CD8-positive, alpha-beta T cell (primary cell): ENCODE measurements at regions of chr17 and their contacts with region 1.

Region 1: GRCh38 chr17:4709794-4710692 is at the start of gene ARRB2:
- DNase-seq: peak; percentile 98 to 100 (median 99)
- ATAC-seq: peak; percentile 81
- H3K4me3 ChIP-seq: peak within 1 kb of the TSS; percentile 91 to 95
- H3K4me3 Mint-ChIP-seq: peak within 1 kb of the TSS; percentile 98
- H3K27ac ChIP-seq: peak within 1 kb of the TSS; percentile 80 to 86
- H3K27ac Mint-ChIP-seq: peak within 1 kb of the TSS; percentile 98
- H3K4me1 ChIP-seq: peaks cover 35% of the 10 kb centered on the region
- H3K4me1 Mint-ChIP-seq: peaks cover 45% of the 10 kb centered on the region
- H3K27me3 ChIP-seq: no peaks in the 10 kb centered on the region
- H3K27me3 Mint-ChIP-seq: no peaks in the 10 kb centered on the region
- CTCF ChIP-seq: peak; percentile 74
- total RNA-seq, gene ARRB2: 222 to 226 TPM

Region 2: DNA sequence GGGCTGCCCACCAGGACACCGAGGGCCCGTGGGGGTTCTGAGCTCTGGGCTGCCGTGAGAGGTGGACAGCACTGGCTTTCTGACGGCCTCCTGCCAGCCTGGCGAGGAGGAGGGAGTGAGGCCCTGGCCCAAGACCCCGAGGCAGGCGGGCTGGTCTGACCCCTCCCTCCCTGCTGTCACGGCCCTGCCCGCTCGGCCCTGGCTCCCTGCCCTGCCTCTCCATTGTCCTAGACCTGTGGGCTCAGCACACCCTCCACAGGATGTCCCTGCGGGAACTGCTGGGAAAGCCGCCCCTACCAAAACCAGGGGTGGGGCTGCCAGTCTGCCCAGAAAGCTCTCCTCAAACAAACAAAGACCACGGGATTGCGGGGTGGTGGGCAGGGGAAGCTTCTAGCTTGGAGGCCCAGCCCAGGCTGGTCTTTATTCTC is 190.7 kb before region 1 on chr17:
- CTCF ChIA-PET with region 1: no interaction called
- POLR2A ChIA-PET with region 1: no interaction called
- intact Hi-C with region 1: no loop called
- DNase-seq: no peak
- ATAC-seq: no peak
- H3K4me3 ChIP-seq: no peak overlapping the region
- H3K4me3 Mint-ChIP-seq: no peak overlapping the region
- H3K27ac ChIP-seq: no peak overlapping the region
- H3K27ac Mint-ChIP-seq: no peak overlapping the region
- H3K4me1 ChIP-seq: no peaks in the 10 kb centered on the region
- H3K4me1 Mint-ChIP-seq: no peaks in the 10 kb centered on the region
- H3K27me3 ChIP-seq: no peaks in the 10 kb centered on the region
- H3K27me3 Mint-ChIP-seq: no peaks in the 10 kb centered on the region
- CTCF ChIP-seq: no peak

Region 3: GRCh38 chr17:4739122-4740024 is 29.3 kb after region 1 on chr17 and contains the starts of genes CXCL16 and ZMYND15:
- CTCF ChIA-PET with region 1: interaction called, 5 read pairs
- POLR2A ChIA-PET with region 1: interaction called, 5 read pairs
- intact Hi-C with region 1: loop called in 1 of 2 experiments (anchors 2 kb)
- DNase-seq: peak; percentile 35 to 84 (median 70)
- ATAC-seq: peak; percentile 70
- H3K4me3 ChIP-seq: peak within 1 kb of the TSS; percentile 62 to 77
- H3K4me3 Mint-ChIP-seq: peak within 1 kb of the TSS; percentile 92
- H3K27ac ChIP-seq: peak within 1 kb of the TSS in 1 of 2 experiments; percentile 26
- H3K27ac Mint-ChIP-seq: peak within 1 kb of the TSS; percentile 92
- H3K4me1 ChIP-seq: peaks cover 10% of the 10 kb centered on the region
- H3K4me1 Mint-ChIP-seq: peaks cover 16% of the 10 kb centered on the region
- H3K27me3 ChIP-seq: peaks cover 0 to 10% of the 10 kb centered on the region in 2 experiments
- H3K27me3 Mint-ChIP-seq: peaks cover 7% of the 10 kb centered on the region
- CTCF ChIP-seq: no peak
- total RNA-seq, gene CXCL16: 41.5 to 42.3 TPM
- total RNA-seq, gene ZMYND15: 3.1 to 3.8 TPM

Region 4: GRCh38 chr17:4796553-4796921 is 86.5 kb after region 1 on chr17:
- CTCF ChIA-PET with region 1: interaction called, 4 read pairs
- POLR2A ChIA-PET with region 1: interaction called, 4 read pairs
- intact Hi-C with region 1: loop called in 1 of 2 experiments (anchors 1 kb)
- DNase-seq: peak in 2 of 9 experiments; percentile 20 to 28
- ATAC-seq: no peak
- H3K4me3 ChIP-seq: peak overlapping the region; percentile 70 to 73
- H3K4me3 Mint-ChIP-seq: peak overlapping the region; percentile 99
- H3K27ac ChIP-seq: peak overlapping the region; percentile 53 to 67
- H3K27ac Mint-ChIP-seq: peak overlapping the region; percentile 97
- H3K4me1 ChIP-seq: peaks cover 7% of the 10 kb centered on the region
- H3K4me1 Mint-ChIP-seq: peaks cover 13% of the 10 kb centered on the region
- H3K27me3 ChIP-seq: no peaks in the 10 kb centered on the region
- H3K27me3 Mint-ChIP-seq: peaks cover 2% of the 10 kb centered on the region
- CTCF ChIP-seq: no peak

Region 5: GRCh38 chr17:4881761-4882555 is 171.9 kb after region 1 on chr17:
- CTCF ChIA-PET with region 1: interaction called, 58 read pairs
- POLR2A ChIA-PET with region 1: no interaction called
- intact Hi-C with region 1: loop called (anchors 1 kb)
- DNase-seq: peak; percentile 43 to 83 (median 72)
- ATAC-seq: peak; percentile 98
- H3K4me3 ChIP-seq: no peak overlapping the region
- H3K4me3 Mint-ChIP-seq: no peak overlapping the region
- H3K27ac ChIP-seq: no peak overlapping the region
- H3K27ac Mint-ChIP-seq: no peak overlapping the region
- H3K4me1 ChIP-seq: no peaks in the 10 kb centered on the region
- H3K4me1 Mint-ChIP-seq: peaks cover 3% of the 10 kb centered on the region
- H3K27me3 ChIP-seq: no peaks in the 10 kb centered on the region
- H3K27me3 Mint-ChIP-seq: no peaks in the 10 kb centered on the region
- CTCF ChIP-seq: peak; percentile 79

Region 6: GRCh38 chr17:4920351-4921048 is 210.5 kb after region 1 on chr17:
- CTCF ChIA-PET with region 1: no interaction called
- POLR2A ChIA-PET with region 1: no interaction called
- intact Hi-C with region 1: no loop called
- DNase-seq: peak in 1 of 9 experiments; percentile 20
- ATAC-seq: no peak
- H3K4me3 ChIP-seq: no peak overlapping the region
- H3K4me3 Mint-ChIP-seq: no peak overlapping the region
- H3K27ac ChIP-seq: no peak overlapping the region
- H3K27ac Mint-ChIP-seq: no peak overlapping the region
- H3K4me1 ChIP-seq: no peaks in the 10 kb centered on the region
- H3K4me1 Mint-ChIP-seq: no peaks in the 10 kb centered on the region
- H3K27me3 ChIP-seq: no peaks in the 10 kb centered on the region
- H3K27me3 Mint-ChIP-seq: no peaks in the 10 kb centered on the region
- CTCF ChIP-seq: no peak

Region 7: GRCh38 chr17:4939796-4940624 is 230.0 kb after region 1 on chr17 and contains the starts of genes RNF167 and SLC25A11:
- CTCF ChIA-PET with region 1: interaction called, 4 read pairs
- POLR2A ChIA-PET with region 1: interaction called, 7 read pairs
- intact Hi-C with region 1: loop called (anchors 1 to 2 kb)
- DNase-seq: peak; percentile 90 to 100 (median 95)
- ATAC-seq: peak; percentile 87
- H3K4me3 ChIP-seq: peak within 1 kb of the TSS; percentile 95 to 96
- H3K4me3 Mint-ChIP-seq: peak within 1 kb of the TSS; percentile 92
- H3K27ac ChIP-seq: peak within 1 kb of the TSS; percentile 83 to 92
- H3K27ac Mint-ChIP-seq: peak within 1 kb of the TSS; percentile 95
- H3K4me1 ChIP-seq: peaks cover 54% of the 10 kb centered on the region
- H3K4me1 Mint-ChIP-seq: peaks cover 60% of the 10 kb centered on the region
- H3K27me3 ChIP-seq: no peaks in the 10 kb centered on the region
- H3K27me3 Mint-ChIP-seq: no peaks in the 10 kb centered on the region
- CTCF ChIP-seq: no peak
- total RNA-seq, gene RNF167: 49.3 to 52.2 TPM
- total RNA-seq, gene SLC25A11: 15.8 to 16.3 TPM

Region 8: GRCh38 chr17:4997302-4998026 is 287.4 kb after region 1 on chr17 and contains the starts of genes INCA1 and KIF1C:
- CTCF ChIA-PET with region 1: no interaction called
- POLR2A ChIA-PET with region 1: no interaction called
- intact Hi-C with region 1: loop called in 1 of 2 experiments (anchors 5 kb)
- DNase-seq: peak; percentile 78 to 95 (median 90)
- ATAC-seq: peak; percentile 97
- H3K4me3 ChIP-seq: peak within 1 kb of the TSS; percentile 59 to 89
- H3K4me3 Mint-ChIP-seq: peak within 1 kb of the TSS; percentile 83
- H3K27ac ChIP-seq: peak within 1 kb of the TSS; percentile 56
- H3K27ac Mint-ChIP-seq: peak within 1 kb of the TSS; percentile 84
- H3K4me1 ChIP-seq: peaks cover 20% of the 10 kb centered on the region
- H3K4me1 Mint-ChIP-seq: peaks cover 23% of the 10 kb centered on the region
- H3K27me3 ChIP-seq: no peaks in the 10 kb centered on the region
- H3K27me3 Mint-ChIP-seq: no peaks in the 10 kb centered on the region
- CTCF ChIP-seq: no peak
- total RNA-seq, gene INCA1: 0.24 TPM in 1 of 2 experiments, not detected in the other
- total RNA-seq, gene KIF1C: 7.1 to 7.2 TPM